Heart right ventricle (tissue), 16 donors: ENCODE measurements at regions of chr11 and their contacts with region 1.

Region 1: GRCh38 chr11:96342961-96343711 is at the start of gene MAML2:
- DNase-seq: peak; percentile 90 to 93
- ATAC-seq: peak; percentile 89 to 97 (median 93)
- H3K4me3 ChIP-seq: peak within 1 kb of the TSS; percentile 36 to 78 (median 64)
- H3K27ac ChIP-seq: peak within 1 kb of the TSS in 9 of 10 donors; percentile 66 to 92 (median 83)
- H3K4me1 ChIP-seq: peaks cover under 1 to 44% (median 36%) of the 10 kb centered on the region in 9 donors
- H3K27me3 ChIP-seq: no peaks in the 10 kb centered on the region
- CTCF ChIP-seq: peak; percentile 90 to 100 (median 98)
- total RNA-seq, gene MAML2: 2.9 to 6.1 (median 4.5) TPM

Region 2: DNA sequence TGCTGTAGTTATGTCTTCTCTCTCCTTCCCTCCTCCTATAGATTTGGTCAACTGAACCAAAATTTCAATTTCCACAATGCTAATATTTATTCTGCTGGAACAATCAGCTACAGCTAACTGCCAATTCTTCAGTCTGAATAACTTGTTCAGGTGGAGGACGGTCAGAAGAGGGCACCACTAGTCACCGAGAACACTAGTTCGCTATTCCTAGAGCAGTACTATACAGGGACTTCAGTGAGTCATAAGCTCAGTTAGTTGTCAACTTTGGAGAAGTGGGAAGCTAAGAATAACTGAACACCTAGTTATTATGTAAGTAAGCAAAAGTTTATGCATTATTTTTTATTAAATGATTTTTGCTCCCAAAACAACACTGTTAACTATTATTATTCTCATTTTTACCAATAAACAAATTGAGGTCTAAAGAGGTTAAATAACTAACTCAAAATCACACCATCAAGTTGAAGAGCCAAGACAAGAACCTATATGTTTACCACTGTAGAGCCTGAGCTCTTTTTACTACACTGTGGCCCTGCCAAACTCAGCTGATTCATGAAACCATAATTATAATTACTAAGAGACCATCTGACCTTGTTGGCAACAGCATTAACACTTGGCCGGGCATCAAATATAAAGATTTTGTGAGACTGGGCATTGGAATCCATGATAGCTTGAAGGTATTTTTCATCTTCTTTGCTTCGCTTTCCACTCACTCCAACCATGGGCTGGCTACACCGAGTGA is 493.9 kb before region 1 on chr11:
- intact Hi-C with region 1: loop called in 4 of 10 experiments (anchors 1 to 10 kb)
- DNase-seq: peak in 1 of 2 donors; percentile 55
- ATAC-seq: peak; percentile 76 to 97 (median 92)
- H3K4me3 ChIP-seq: no peak overlapping the region
- H3K27ac ChIP-seq: peak overlapping the region in 3 of 10 donors; percentile 8 to 42 (median 33)
- H3K4me1 ChIP-seq: peaks cover 0 to 13% (median 0%) of the 10 kb centered on the region in 9 donors
- H3K27me3 ChIP-seq: no peaks in the 10 kb centered on the region
- CTCF ChIP-seq: peak; percentile 15 to 71 (median 59)

Region 3: GRCh38 chr11:96001037-96001436 is 342.1 kb before region 1 on chr11:
- intact Hi-C with region 1: loop called in 1 of 10 experiments (anchors 5 kb)
- DNase-seq: peak; percentile 61 to 81
- ATAC-seq: peak; percentile 90 to 100 (median 97)
- H3K4me3 ChIP-seq: peak overlapping the region in 1 of 10 donors; percentile 4
- H3K27ac ChIP-seq: peak overlapping the region in 9 of 10 donors; percentile 21 to 76 (median 64)
- H3K4me1 ChIP-seq: peaks cover 0 to 34% (median 25%) of the 10 kb centered on the region in 9 donors
- H3K27me3 ChIP-seq: no peaks in the 10 kb centered on the region
- CTCF ChIP-seq: no peak

Region 4: DNA sequence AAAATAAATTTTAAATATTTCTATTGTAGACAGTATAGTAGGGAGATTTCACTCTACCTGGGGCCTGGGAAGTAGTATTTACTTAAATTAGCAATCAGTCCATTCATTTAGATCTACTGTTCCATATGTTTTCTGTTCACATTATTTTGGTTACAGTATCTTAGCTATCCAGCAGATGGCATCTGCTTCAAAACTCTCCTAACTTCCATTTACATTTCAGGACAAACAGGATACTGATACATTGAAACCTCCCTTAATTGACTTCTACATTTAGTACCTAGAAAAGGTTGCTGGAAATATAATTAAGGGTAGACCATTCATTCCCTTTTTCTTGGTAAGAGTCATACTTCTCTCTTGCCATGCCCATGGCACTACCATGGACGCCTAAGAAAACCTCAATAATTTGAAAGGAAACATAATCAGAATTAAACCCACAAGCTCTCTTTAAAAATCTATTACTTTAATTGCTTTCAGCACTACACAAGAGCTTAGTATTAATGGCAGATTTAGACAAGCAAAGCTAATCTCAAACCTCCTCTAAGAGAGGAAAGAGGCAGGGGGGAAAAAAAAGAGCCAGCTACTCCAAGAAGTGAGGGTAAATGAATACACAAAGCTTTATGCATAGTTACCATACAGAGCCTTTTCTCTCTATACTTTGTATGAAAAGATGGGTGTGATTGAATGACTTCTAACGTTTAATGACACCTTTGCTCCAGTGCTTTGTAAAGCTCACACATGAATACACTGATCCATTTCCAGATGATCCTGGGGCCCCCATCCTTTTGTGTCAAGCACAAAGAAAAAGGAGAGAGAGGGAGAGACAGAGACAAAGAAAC is 288.0 kb before region 1 on chr11:
- intact Hi-C with region 1: loop called (anchors 1 to 10 kb)
- DNase-seq: no peak
- ATAC-seq: peak in 5 of 8 donors; percentile 6 to 56 (median 50)
- H3K4me3 ChIP-seq: no peak overlapping the region
- H3K27ac ChIP-seq: peak overlapping the region in 2 of 10 donors; percentile 2 to 19
- H3K4me1 ChIP-seq: peaks cover 0 to 52% (median 23%) of the 10 kb centered on the region in 9 donors
- H3K27me3 ChIP-seq: no peaks in the 10 kb centered on the region
- CTCF ChIP-seq: peak; percentile 48 to 83 (median 65)

Region 5: DNA sequence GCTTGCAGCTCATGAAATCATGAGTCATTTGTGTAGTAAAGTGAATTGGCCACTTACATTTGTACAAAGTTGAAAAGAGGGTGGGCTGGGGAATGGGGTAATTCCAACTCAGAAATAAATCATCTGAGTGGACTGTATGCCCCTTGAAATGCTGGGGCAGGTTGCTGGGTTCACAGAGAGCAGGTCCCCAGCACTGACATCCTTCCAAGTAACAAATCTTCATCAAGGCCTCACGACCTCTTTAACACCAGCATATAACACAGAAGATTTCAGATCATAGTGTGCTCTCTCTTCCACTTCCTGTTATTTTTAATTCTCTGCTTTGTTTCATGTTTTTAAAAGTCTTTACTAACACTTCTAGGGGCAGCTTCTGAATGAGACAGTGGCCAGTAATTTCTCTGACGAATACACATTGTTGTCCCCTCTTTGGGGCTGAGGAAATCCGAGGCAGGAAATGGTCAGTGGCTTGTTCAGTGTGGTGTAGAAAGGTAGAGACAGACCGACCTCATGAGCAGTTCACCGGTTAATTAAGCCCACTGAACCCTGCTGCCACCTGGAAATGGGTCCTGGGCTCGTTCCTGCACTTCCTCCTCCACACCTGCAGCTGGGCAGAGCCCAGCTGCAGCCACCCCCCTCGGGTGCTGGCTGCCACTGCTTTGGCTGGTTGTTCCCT is 127.9 kb before region 1 on chr11:
- intact Hi-C with region 1: loop called in 2 of 10 experiments (anchors 5 kb)
- DNase-seq: no peak
- ATAC-seq: peak in 6 of 8 donors; percentile 18 to 46 (median 39)
- H3K4me3 ChIP-seq: no peak overlapping the region
- H3K27ac ChIP-seq: peak overlapping the region in 9 of 10 donors; percentile 46 to 84 (median 71)
- H3K4me1 ChIP-seq: peaks cover 12 to 82% (median 73%) of the 10 kb centered on the region in 9 donors
- H3K27me3 ChIP-seq: no peaks in the 10 kb centered on the region
- CTCF ChIP-seq: no peak

Region 6: DNA sequence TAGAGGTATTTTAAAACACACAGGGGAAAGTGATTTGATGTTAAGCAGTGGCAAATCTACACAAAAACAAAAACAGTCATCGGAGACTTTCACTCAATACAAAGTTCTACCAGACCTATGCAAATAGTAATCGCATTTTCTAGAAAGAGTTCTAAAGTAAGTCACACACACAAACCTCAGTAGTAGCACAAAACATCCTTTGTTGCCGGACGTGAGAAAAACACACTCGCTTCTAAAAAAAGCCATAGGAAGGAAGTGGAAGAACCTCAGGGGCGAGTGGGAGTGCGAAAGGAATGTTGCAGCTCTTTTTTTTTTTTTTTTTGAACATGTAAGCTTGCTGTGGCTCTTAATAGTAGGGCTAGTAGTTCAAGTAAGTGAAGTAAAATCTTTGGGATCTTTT is 89.0 kb before region 1 on chr11:
- intact Hi-C with region 1: loop called in 3 of 10 experiments (anchors 5 to 10 kb)
- DNase-seq: peak in 1 of 2 donors; percentile 80
- ATAC-seq: peak in 7 of 8 donors; percentile 56 to 86 (median 73)
- H3K4me3 ChIP-seq: peak overlapping the region in 5 of 10 donors; percentile 5 to 37 (median 17)
- H3K27ac ChIP-seq: peak overlapping the region in 7 of 10 donors; percentile 32 to 79 (median 65)
- H3K4me1 ChIP-seq: peaks cover 17 to 67% (median 59%) of the 10 kb centered on the region in 9 donors
- H3K27me3 ChIP-seq: no peaks in the 10 kb centered on the region
- CTCF ChIP-seq: no peak